Activated T-helper 2 cell treated with anti-CD3 and anti-CD28 coated beads, Interferon-gamma antibody, Interleukin-2, Interleukin-4, amounts not matched to agents 10 μg/mL and 5 μg/mL and 100 μg/mL, durations not matched to agents 14 hours and 24 hours and 36 hours (primary cell): ENCODE measurements at regions of chrX and their contacts with region 1.

Region 1: GRCh38 chrX:79259073-79259689 is 108.0 kb downstream of the ITM2A start:
- DNase-seq: peak; percentile 60
- H3K4me3 Mint-ChIP-seq: peak overlapping the region; percentile 68
- H3K27ac Mint-ChIP-seq: peak overlapping the region; percentile 88
- H3K4me1 Mint-ChIP-seq: peaks cover 63% of the 10 kb centered on the region
- H3K27me3 Mint-ChIP-seq: no peaks in the 10 kb centered on the region

Region 2: DNA sequence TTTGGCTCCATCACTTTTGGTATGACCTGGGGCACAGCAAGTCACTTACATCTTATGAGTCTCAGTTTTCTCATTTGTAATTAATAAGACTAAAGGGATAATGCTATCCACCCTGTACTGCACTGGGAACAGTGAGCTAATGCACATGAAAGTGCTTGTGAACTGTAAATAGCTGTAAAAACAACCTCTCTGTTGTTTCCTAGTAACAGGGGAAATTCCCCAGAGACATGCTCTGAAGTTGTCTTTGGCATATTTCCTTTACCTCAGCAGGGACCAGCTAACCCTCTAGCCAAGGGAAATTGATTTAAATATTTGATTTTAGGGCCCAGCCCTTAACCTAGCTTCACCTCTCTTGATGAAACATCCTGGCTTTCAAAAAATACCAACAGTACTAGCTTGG is 925.7 kb before region 1 on chrX:
- intact Hi-C with region 1: loop called (anchors 5 kb)
- DNase-seq: no peak
- H3K4me3 Mint-ChIP-seq: no peak overlapping the region
- H3K27ac Mint-ChIP-seq: peak overlapping the region; percentile 75
- H3K4me1 Mint-ChIP-seq: peaks cover 52% of the 10 kb centered on the region
- H3K27me3 Mint-ChIP-seq: no peaks in the 10 kb centered on the region

Region 3: GRCh38 chrX:78527263-78527662 is 731.9 kb before region 1 on chrX:
- intact Hi-C with region 1: loop called (anchors 5 kb)
- DNase-seq: no peak
- H3K4me3 Mint-ChIP-seq: no peak overlapping the region
- H3K27ac Mint-ChIP-seq: peak overlapping the region; percentile 85
- H3K4me1 Mint-ChIP-seq: peaks cover 39% of the 10 kb centered on the region
- H3K27me3 Mint-ChIP-seq: no peaks in the 10 kb centered on the region

Region 4: DNA sequence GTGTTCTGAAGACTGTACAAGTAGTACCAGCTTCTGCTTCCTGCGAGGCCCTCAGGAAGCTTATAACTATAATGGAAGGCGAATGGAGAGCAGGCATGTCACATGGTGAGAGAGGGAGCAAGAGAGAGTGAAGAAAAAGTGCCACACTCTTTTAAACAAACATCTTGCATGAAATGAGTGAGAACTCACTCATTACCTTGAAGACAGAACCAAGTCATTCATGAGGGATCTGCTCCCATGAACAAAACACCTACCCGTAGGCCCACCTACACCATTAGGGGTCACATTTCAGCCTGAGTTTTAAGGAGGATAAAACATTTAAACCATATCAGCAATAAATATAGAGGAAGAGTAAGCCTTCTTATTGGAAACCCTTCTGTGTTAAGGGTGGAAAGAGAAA is 294.6 kb before region 1 on chrX:
- intact Hi-C with region 1: loop called (anchors 5 kb)
- DNase-seq: no peak
- H3K4me3 Mint-ChIP-seq: no peak overlapping the region
- H3K27ac Mint-ChIP-seq: peak overlapping the region; percentile 55
- H3K4me1 Mint-ChIP-seq: peaks cover 19% of the 10 kb centered on the region
- H3K27me3 Mint-ChIP-seq: no peaks in the 10 kb centered on the region

Region 5: GRCh38 chrX:79096145-79096556 is 163.0 kb before region 1 on chrX:
- intact Hi-C with region 1: loop called (anchors 5 kb)
- DNase-seq: no peak
- H3K4me3 Mint-ChIP-seq: peak overlapping the region; percentile 42
- H3K27ac Mint-ChIP-seq: peak overlapping the region; percentile 93
- H3K4me1 Mint-ChIP-seq: peaks cover 48% of the 10 kb centered on the region
- H3K27me3 Mint-ChIP-seq: no peaks in the 10 kb centered on the region

Region 6: DNA sequence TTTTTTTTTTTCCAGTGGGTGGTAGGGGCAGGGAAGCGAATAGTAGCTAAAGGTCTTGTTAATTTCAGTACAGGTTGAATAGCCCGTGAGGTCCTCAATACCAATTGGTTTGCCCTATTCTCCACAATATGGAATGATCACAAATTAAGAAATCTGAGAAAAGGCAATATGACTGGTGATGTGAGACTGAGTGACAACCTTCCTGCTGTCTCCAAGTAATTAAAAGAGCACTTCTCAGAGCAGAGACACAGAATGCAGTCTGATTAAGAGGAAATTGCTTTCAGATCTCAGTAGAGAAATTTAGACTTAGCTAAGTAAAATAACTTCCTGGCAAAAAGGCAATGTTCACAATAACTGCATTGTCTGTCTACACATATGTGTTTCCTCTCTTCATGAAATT is 91.7 kb before region 1 on chrX:
- intact Hi-C with region 1: loop called (anchors 1 kb)
- DNase-seq: no peak
- H3K4me3 Mint-ChIP-seq: peak overlapping the region; percentile 26
- H3K27ac Mint-ChIP-seq: peak overlapping the region; percentile 91
- H3K4me1 Mint-ChIP-seq: peaks cover 66% of the 10 kb centered on the region
- H3K27me3 Mint-ChIP-seq: no peaks in the 10 kb centered on the region

Region 7: GRCh38 chrX:79195027-79195426 is 64.2 kb before region 1 on chrX:
- intact Hi-C with region 1: no loop called
- DNase-seq: no peak
- H3K4me3 Mint-ChIP-seq: no peak overlapping the region
- H3K27ac Mint-ChIP-seq: no peak overlapping the region
- H3K4me1 Mint-ChIP-seq: no peaks in the 10 kb centered on the region
- H3K27me3 Mint-ChIP-seq: no peaks in the 10 kb centered on the region

Region 8: GRCh38 chrX:79235899-79236298 is 23.3 kb before region 1 on chrX:
- intact Hi-C with region 1: no loop called
- DNase-seq: no peak
- H3K4me3 Mint-ChIP-seq: no peak overlapping the region
- H3K27ac Mint-ChIP-seq: no peak overlapping the region
- H3K4me1 Mint-ChIP-seq: peaks cover 2% of the 10 kb centered on the region
- H3K27me3 Mint-ChIP-seq: no peaks in the 10 kb centered on the region

Region 9: DNA sequence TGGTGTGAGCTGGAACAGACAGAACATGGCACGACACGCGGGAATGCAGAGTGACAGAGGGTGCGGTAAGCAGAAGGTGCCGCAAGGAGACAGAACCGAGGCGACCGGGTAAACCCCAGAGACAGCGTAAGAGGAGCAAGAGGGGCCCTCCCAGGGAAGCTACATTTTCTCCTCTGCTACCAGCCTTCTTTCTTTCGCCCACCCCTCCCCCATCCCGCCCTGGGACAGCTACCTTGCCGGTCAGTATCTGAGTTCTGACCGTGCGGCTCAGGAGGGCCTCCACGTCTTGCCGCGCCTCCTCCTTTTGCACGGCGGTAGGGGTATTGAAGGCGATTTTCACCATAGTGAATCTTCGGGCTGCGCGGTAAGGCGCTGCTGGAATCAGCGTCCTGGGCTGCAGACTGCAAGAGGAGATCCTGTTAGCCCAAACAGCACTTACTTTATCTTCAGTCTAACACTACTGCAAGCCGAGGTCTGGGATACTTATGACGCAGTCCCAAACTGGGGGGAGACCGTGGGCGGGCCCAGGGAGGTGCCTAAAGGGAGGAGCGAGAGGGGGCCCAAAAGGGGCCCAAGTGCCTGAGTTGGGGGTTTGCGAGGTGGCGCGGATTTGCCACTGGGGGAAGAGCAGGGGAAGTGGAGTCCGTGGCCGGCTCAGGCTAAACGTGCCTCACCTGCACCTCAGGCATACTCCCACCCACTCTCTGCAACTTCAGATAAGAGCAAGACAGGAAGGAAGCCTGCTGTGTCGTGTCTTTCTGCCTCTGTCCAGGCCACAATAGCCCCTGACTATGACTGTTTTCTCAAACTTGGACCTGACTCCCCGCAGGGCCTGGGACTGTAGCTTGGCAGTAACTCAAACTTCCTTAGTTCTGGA is 107.9 kb after region 1 on chrX and contains the start of gene ITM2A:
- intact Hi-C with region 1: loop called (anchors 5 kb)
- DNase-seq: peak; percentile 34
- H3K4me3 Mint-ChIP-seq: peak within 1 kb of the TSS; percentile 95
- H3K27ac Mint-ChIP-seq: peak within 1 kb of the TSS; percentile 92
- H3K4me1 Mint-ChIP-seq: peaks cover 33% of the 10 kb centered on the region
- H3K27me3 Mint-ChIP-seq: no peaks in the 10 kb centered on the region
- total RNA-seq, gene ITM2A: 138 and 142 TPM in 2 replicates

Region 10: DNA sequence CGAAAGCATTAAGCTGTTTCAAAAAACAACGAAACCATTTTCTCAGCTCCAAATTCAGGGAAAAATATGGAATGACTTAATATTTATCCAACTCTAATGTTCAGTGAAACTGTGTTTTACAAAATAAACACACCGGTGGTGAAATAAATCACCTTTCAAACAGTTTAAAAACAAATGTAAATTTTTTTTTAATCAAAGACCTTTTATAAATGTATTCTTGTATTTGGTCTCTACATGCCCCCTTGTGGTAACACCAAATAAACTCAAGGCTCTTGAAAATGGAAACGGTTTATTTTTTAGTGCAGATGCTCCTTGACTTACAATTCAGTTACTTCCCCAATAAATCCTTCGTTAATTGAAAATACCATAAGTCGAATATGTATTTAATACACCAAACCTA is 153.8 kb after region 1 on chrX:
- intact Hi-C with region 1: no loop called
- DNase-seq: no peak
- H3K4me3 Mint-ChIP-seq: peak overlapping the region; percentile 69
- H3K27ac Mint-ChIP-seq: no peak overlapping the region
- H3K4me1 Mint-ChIP-seq: peaks cover 28% of the 10 kb centered on the region
- H3K27me3 Mint-ChIP-seq: no peaks in the 10 kb centered on the region